ENCODE measurements at regions of chr3 and their contacts with region 1.

Region 1: DNA sequence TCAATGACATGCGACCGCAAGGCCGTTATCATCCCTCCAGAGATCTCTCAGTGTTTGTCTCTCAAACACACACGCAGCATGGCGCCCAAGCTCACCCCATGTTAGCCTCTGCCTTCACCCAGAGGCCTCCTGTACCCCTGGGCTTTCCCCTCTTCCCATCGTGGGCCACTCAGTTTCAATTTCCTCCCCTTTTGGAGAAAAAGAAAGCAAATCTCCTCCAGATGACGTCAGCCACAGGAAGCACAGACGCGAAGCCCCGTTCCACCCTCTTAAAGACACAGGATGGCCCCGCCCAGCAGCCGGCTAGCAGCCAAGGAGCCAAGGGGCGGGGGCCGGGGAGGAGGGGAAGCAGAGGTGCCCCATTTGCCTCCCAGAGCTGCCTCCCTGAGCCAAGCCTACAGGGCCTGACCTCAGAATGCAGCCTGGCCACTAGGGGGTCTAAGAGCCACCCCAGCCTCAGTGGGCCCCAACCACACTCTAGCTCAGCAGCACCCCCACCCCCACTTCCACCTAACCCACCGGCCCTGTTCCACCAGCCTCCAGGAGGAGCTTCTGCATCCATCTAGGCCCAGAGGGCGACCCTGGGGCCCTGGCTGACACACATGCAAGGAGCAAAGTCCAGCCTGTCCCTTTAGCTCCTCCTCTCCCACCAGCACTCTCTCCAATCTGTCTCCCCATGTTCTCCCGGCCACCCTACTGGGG is 26.5 kb downstream of the ATRIP start:
- DNase-seq: peak; percentile 83 to 99
- ATAC-seq: peak; percentile 86 to 93 (median 91)
- H3K4me3 ChIP-seq: peak overlapping the region; percentile 47
- H3K4me3 Mint-ChIP-seq: peak overlapping the region; percentile 94
- H3K27ac ChIP-seq: peak overlapping the region; percentile 88
- H3K27ac Mint-ChIP-seq: peak overlapping the region; percentile 95 to 97
- H3K4me1 ChIP-seq: peaks cover 66% of the 10 kb centered on the region
- H3K4me1 Mint-ChIP-seq: peaks cover 41 to 53% of the 10 kb centered on the region in 2 donors
- H3K27me3 ChIP-seq: no peaks in the 10 kb centered on the region
- H3K27me3 Mint-ChIP-seq: no peaks in the 10 kb centered on the region
- CTCF ChIP-seq: peak; percentile 36

Region 2: GRCh38 chr3:48318783-48319468 is 154.1 kb before region 1 on chr3:
- intact Hi-C with region 1: no loop called
- DNase-seq: no peak
- ATAC-seq: no peak
- H3K4me3 ChIP-seq: no peak overlapping the region
- H3K4me3 Mint-ChIP-seq: no peak overlapping the region
- H3K27ac ChIP-seq: no peak overlapping the region
- H3K27ac Mint-ChIP-seq: no peak overlapping the region
- H3K4me1 ChIP-seq: no peaks in the 10 kb centered on the region
- H3K4me1 Mint-ChIP-seq: peaks cover 0 to 4% of the 10 kb centered on the region in 2 donors
- H3K27me3 ChIP-seq: peaks cover 2% of the 10 kb centered on the region
- H3K27me3 Mint-ChIP-seq: peaks cover 16 to 18% of the 10 kb centered on the region in 2 donors
- CTCF ChIP-seq: no peak

Region 3: GRCh38 chr3:48408823-48409281 is 64.2 kb before region 1 on chr3:
- intact Hi-C with region 1: no loop called
- DNase-seq: peak in 1 of 2 donors; percentile 6
- ATAC-seq: no peak
- H3K4me3 ChIP-seq: no peak overlapping the region
- H3K4me3 Mint-ChIP-seq: no peak overlapping the region
- H3K27ac ChIP-seq: no peak overlapping the region
- H3K27ac Mint-ChIP-seq: no peak overlapping the region
- H3K4me1 ChIP-seq: no peaks in the 10 kb centered on the region
- H3K4me1 Mint-ChIP-seq: no peaks in the 10 kb centered on the region
- H3K27me3 ChIP-seq: no peaks in the 10 kb centered on the region
- H3K27me3 Mint-ChIP-seq: no peaks in the 10 kb centered on the region
- CTCF ChIP-seq: no peak

Region 4: DNA sequence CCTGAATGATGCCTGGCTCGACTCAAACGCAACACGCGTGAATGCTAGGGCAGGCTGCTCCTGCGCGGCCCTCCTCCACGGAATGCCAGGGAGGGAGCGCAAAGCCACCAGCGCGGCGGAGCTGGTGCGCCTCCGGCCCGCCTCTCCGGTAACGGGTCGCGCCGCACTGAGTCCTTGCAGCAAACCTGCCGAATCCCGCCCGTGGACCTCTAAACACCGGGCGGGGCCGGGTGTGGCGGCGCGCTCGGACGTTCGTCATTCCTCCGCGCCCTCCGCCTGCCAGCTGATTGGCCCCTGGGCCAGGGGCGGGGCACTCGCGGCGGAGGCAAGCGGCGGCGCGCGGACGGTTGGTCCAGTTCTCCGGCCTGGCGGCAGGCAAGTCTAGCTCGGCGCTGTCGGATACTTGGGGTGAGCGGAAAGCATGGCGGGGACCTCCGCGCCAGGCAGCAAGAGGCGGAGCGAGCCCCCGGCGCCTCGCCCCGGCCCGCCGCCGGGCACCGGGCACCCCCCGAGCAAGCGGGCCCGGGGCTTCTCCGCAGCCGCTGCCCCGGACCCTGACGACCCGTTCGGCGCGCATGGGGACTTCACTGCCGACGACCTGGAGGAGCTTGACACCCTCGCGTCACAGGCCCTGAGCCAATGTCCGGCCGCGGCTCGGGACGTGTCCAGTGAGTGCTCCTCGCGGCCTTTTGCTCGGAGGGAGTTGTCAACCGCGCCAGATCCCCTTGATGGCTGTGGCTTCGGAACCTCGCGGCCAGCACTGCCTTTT is 26.5 kb before region 1 on chr3 and contains the start of gene ATRIP:
- intact Hi-C with region 1: loop called (anchors 2 kb)
- DNase-seq: peak; percentile 90 to 91
- ATAC-seq: peak; percentile 97 to 99 (median 99)
- H3K4me3 ChIP-seq: peak within 1 kb of the TSS; percentile 56
- H3K4me3 Mint-ChIP-seq: peak within 1 kb of the TSS; percentile 93
- H3K27ac ChIP-seq: peak within 1 kb of the TSS; percentile 68
- H3K27ac Mint-ChIP-seq: peak within 1 kb of the TSS; percentile 94 to 95
- H3K4me1 ChIP-seq: peaks cover 23% of the 10 kb centered on the region
- H3K4me1 Mint-ChIP-seq: peaks cover 31 to 34% of the 10 kb centered on the region in 2 donors
- H3K27me3 ChIP-seq: no peaks in the 10 kb centered on the region
- H3K27me3 Mint-ChIP-seq: no peaks in the 10 kb centered on the region
- CTCF ChIP-seq: peak; percentile 17
- total RNA-seq, gene ATRIP: 8.5 to 11.0 (median 10.6) TPM

Region 5: GRCh38 chr3:48459773-48460516 is 13.1 kb before region 1 on chr3:
- intact Hi-C with region 1: no loop called
- DNase-seq: no peak
- ATAC-seq: no peak
- H3K4me3 ChIP-seq: no peak overlapping the region
- H3K4me3 Mint-ChIP-seq: no peak overlapping the region
- H3K27ac ChIP-seq: no peak overlapping the region
- H3K27ac Mint-ChIP-seq: no peak overlapping the region
- H3K4me1 ChIP-seq: peaks cover under 1% of the 10 kb centered on the region
- H3K4me1 Mint-ChIP-seq: no peaks in the 10 kb centered on the region
- H3K27me3 ChIP-seq: no peaks in the 10 kb centered on the region
- H3K27me3 Mint-ChIP-seq: no peaks in the 10 kb centered on the region
- CTCF ChIP-seq: no peak